ENCODE measurements at regions of chr22 and their contacts with region 1.

Region 1: GRCh38 chr22:44486538-44486937 is 11.5 kb downstream of the RTL6 start:
- DNase-seq: peak; percentile 57 to 77
- H3K4me3 ChIP-seq: no peak overlapping the region
- H3K27ac ChIP-seq: no peak overlapping the region
- H3K4me1 ChIP-seq: peaks cover 39% of the 10 kb centered on the region
- H3K27me3 ChIP-seq: no peaks in the 10 kb centered on the region
- CTCF ChIP-seq: no peak

Region 2: GRCh38 chr22:44468973-44469372 is 17.6 kb before region 1 on chr22:
- CTCF ChIA-PET with region 1: interaction called, 14 read pairs
- POLR2A ChIA-PET with region 1: interaction called, 5 read pairs
- intact Hi-C with region 1: no loop called
- DNase-seq: no peak
- H3K4me3 ChIP-seq: no peak overlapping the region
- H3K27ac ChIP-seq: no peak overlapping the region
- H3K4me1 ChIP-seq: peaks cover 3% of the 10 kb centered on the region; the same call in 1 of the 2 replicates
- H3K27me3 ChIP-seq: no peaks in the 10 kb centered on the region
- CTCF ChIP-seq: no peak

Region 3: DNA sequence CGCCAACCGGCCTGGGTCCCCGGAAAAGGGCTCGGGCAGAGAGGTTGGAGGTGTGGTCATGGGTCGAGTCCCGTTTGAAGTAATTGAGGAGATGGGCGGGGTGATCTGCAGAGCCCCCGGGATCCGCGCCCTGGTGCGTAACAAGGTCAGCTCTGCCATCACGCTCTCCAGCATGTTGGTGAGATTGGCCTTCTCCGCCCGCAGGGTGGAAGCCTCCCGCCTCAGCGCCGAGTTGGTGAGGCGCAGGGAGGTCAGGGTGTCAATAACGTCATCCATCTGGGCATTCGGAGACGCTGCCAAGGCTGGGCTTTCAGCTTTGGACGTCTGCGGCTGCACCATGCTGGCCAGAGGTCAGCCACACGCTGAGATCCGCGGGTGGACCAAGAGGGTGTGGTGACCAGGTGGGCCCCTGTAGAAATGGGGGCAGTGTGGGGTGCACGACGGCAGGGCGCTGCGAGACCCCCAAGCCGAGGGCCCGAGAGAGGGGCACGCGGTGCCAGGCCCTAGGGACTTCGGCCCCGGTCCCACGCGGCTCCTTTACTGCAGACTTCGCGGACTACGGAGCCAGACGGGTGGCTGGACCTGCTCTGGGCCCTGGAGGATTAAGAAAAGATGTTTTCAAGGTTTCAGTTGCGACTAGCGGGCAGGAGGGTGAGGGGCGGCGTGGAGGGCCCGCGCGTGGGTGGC is 10.8 kb after region 1 on chr22:
- CTCF ChIA-PET with region 1: no interaction called
- POLR2A ChIA-PET with region 1: no interaction called
- intact Hi-C with region 1: no loop called
- DNase-seq: peak in 1 of 2 experiments; percentile 46
- H3K4me3 ChIP-seq: peak overlapping the region; percentile 98
- H3K27ac ChIP-seq: peak overlapping the region; percentile 78
- H3K4me1 ChIP-seq: peaks cover 24% of the 10 kb centered on the region
- H3K27me3 ChIP-seq: no peaks in the 10 kb centered on the region
- CTCF ChIP-seq: no peak

Region 4: DNA sequence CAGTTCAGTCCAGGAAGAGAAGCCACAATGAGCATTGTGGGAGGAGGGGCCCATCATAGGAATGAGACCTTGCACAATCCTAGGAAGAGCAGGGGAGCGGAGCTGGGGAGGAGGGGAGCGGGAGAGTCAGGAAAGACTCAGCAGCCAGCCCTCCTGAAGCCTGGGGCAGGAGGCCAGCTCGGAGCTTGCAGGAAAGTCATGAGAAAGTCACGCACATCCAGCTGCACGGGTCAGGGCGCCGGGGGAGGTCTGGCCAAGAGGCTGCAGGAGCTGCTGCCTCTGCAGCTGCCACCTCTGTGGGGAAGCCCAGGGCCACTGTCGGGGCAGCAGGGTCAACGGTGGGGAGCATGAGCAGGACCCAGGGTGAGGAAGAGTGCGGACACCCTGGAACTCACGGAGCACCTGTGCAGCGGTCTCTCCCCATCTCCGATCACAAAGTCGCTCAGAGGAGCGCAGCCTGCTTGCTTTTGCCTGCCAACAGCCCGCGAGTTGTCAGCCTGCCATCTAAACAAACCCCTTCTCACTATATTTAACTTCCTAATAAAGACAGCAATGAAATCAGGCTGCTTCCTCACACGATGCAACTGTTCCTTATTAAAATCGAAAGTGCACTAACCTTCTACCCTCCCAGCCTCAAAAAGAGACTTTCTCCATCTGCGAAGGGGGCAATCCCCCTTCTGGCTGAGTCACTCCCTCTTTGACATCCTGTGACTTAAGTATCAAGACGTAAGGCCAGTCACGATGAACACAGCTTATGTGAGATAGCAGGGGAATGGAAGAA is 64.4 kb after region 1 on chr22:
- CTCF ChIA-PET with region 1: no interaction called
- POLR2A ChIA-PET with region 1: no interaction called
- intact Hi-C with region 1: loop called (anchors 10 kb)
- DNase-seq: peak; percentile 80 to 93
- H3K4me3 ChIP-seq: peak overlapping the region; percentile 51
- H3K27ac ChIP-seq: peak overlapping the region; percentile 95
- H3K4me1 ChIP-seq: peaks cover 30% of the 10 kb centered on the region
- H3K27me3 ChIP-seq: no peaks in the 10 kb centered on the region
- CTCF ChIP-seq: no peak

Measured in PC-9 (cell line).